GM12878 (cell line): ENCODE measurements at regions of chr1 and their contacts with region 1.

Region 1: GRCh38 chr1:31891280-31891679 is 46.9 kb downstream of the PTP4A2 start:
- DNase-seq: peak; percentile 82
- ATAC-seq: peak; percentile 85
- H3K4me3 ChIP-seq: no peak overlapping the region
- H3K27ac ChIP-seq: peak overlapping the region; percentile 17; the same call in 1 of the 2 replicates
- H3K4me1 ChIP-seq: peaks cover 22% of the 10 kb centered on the region
- H3K27me3 ChIP-seq: no peaks in the 10 kb centered on the region
- CTCF ChIP-seq: no peak
- EP300 ChIP-seq: peak; percentile 88 to 91
- POLR2A ChIP-seq: no peak
- RAD21 ChIP-seq: no peak

Region 2: DNA sequence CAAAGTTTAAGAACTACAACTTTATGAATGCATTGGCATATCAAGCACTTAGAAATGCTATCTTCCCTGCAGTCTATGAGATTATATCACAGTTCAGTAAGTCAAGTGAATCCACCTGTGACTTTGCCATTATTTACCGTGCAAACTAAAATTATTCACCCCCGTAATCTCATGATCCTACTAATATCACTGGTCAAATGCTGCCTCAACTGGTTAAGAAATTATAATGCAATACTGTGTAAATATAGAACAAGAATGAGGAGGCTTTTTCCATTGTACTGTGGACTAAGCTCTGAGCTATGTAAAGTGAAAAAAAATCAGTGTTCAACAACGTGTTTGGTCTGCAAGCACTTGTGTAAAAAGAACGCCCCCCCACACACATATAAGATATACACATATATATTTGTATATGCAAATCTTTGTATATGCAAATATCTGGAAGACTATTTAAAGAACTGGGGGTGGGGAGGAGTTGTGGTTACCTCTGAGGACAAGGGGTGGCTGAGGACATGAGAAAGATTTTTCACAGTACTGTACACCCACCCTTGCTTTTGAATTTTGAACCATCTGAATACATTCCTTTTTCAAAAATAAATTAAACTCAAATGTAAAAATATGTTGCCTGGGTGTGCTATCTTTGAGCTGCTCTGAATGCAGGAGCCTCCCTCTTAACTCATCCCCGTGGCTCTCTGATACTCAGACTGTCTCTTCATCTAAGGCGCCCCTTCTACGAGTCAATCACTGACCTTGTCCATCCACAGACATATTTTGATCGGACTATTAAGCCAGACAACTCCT is 10.2 kb before region 1 on chr1:
- CTCF ChIA-PET with region 1: interaction called, 7 read pairs
- POLR2A ChIA-PET with region 1: interaction called, 19 read pairs
- RAD21 ChIA-PET with region 1: interaction called, 14 read pairs
- SMC1A ChIA-PET with region 1: interaction called, 11 read pairs
- in situ Hi-C with region 1: no loop called
- intact Hi-C with region 1: no loop called
- DNase-seq: no peak
- ATAC-seq: peak; percentile 78
- H3K4me3 ChIP-seq: peak overlapping the region; percentile 39; the same call in 1 of the 2 replicates
- H3K27ac ChIP-seq: no peak overlapping the region
- H3K4me1 ChIP-seq: peaks cover 20% of the 10 kb centered on the region
- H3K27me3 ChIP-seq: no peaks in the 10 kb centered on the region
- CTCF ChIP-seq: no peak
- EP300 ChIP-seq: no peak
- POLR2A ChIP-seq: no peak
- RAD21 ChIP-seq: no peak

Region 3: DNA sequence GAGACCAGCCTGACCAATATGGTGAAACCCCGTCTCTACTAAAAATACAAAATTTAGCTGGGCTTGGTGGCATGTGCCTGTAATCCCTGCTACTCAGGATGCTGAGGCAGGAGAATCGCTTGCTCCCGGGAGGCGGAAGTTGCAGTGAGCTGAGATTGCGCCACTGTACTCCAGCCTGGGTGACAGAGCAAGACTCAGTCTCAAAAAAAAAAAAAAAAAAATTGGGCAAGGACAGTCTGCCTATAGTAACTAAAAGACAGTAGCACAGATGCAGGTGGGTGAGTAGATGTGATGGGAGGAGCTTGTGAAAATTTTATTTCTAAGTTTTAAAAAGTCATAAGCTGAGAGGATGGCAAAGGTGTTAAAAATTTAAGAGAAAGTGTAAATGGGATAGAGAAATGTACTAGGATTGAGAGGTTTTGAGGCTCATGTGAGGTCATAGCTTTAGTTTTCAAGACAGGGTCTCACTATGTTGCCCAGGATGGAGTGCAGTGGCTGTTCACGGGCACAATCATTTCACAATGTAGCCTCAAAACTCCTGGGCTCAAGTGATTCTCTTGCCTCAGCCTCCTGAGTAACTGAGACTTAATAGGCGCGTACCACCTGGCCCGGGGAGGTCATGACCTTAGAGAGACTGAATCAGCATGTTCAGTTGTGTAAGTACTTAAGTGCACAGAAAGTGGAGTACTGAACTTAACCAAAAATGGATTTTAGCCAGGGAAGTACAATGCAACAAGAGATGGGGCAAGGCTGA is 13.2 kb after region 1 on chr1:
- CTCF ChIA-PET with region 1: interaction called, 6 read pairs
- POLR2A ChIA-PET with region 1: interaction called, 11 read pairs
- RAD21 ChIA-PET with region 1: interaction called, 7 read pairs
- SMC1A ChIA-PET with region 1: interaction called, 24 read pairs
- in situ Hi-C with region 1: no loop called
- intact Hi-C with region 1: no loop called
- DNase-seq: no peak
- ATAC-seq: peak; percentile 16; the same call in 2 of the 3 replicates
- H3K4me3 ChIP-seq: no peak overlapping the region
- H3K27ac ChIP-seq: no peak overlapping the region
- H3K4me1 ChIP-seq: peaks cover 13% of the 10 kb centered on the region
- H3K27me3 ChIP-seq: no peaks in the 10 kb centered on the region
- CTCF ChIP-seq: no peak
- EP300 ChIP-seq: no peak
- POLR2A ChIP-seq: no peak
- RAD21 ChIP-seq: no peak